Transverse colon (tissue), 4 donors: ENCODE measurements at regions of chr7 and their contacts with region 1.

Region 1: GRCh38 chr7:7535691-7536090 is at the start of gene COL28A1:
- DNase-seq: no peak
- H3K4me3 ChIP-seq: no peak within 1 kb of the TSS
- H3K27ac ChIP-seq: no peak within 1 kb of the TSS
- H3K4me1 ChIP-seq: peaks cover 0 to 4% (median 0%) of the 10 kb centered on the region in 4 donors
- H3K27me3 ChIP-seq: no peaks in the 10 kb centered on the region
- CTCF ChIP-seq: no peak
- EP300 ChIP-seq: no peak
- POLR2A ChIP-seq: no peak
- total RNA-seq, gene COL28A1: 0.60 to 4.4 (median 4.1) TPM

Region 2: GRCh38 chr7:7103343-7104313 is 432.1 kb before region 1 on chr7:
- in situ Hi-C with region 1: loop called in 3 of 4 experiments (anchors 5 to 10 kb)
- intact Hi-C with region 1: loop called (anchors 5 kb)
- DNase-seq: no peak
- H3K4me3 ChIP-seq: peak overlapping the region in 2 of 4 donors; percentile 3 to 11
- H3K27ac ChIP-seq: peak overlapping the region in 2 of 4 donors; percentile 2
- H3K4me1 ChIP-seq: peaks cover 0 to 6% (median 4%) of the 10 kb centered on the region in 4 donors
- H3K27me3 ChIP-seq: no peaks in the 10 kb centered on the region
- CTCF ChIP-seq: peak; percentile 65 to 75 (median 68)
- EP300 ChIP-seq: no peak
- POLR2A ChIP-seq: no peak

Region 3: DNA sequence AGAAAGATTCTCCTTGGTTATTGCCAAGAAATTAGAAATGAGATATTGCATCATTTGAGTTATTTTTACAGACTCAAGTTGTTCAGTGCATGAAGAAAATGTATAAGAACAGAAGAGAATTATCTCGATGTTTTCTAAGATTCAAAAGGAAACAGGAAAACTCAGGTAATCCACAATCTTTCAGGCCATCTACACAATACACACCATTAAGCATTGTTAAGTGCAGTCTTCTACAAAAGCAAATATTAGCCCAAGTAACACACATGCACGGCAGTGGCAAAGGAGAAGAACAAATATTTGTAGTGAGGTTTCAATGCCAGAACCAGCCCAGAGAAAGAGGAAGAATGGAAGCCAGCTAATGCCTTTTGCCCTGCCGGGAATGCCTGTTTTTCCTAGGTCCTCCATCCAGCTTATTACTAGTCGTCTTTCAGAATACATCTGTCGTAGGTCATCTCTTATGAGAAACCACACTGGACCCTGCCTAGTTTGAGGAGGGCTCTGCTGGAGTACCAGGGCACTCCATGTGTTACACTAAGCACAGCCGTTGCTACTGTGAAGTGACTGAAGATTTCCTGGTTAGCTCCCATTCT is 420.9 kb before region 1 on chr7:
- in situ Hi-C with region 1: loop called in 1 of 4 experiments (anchors 5 kb)
- intact Hi-C with region 1: no loop called
- DNase-seq: no peak
- H3K4me3 ChIP-seq: no peak overlapping the region
- H3K27ac ChIP-seq: peak overlapping the region in 1 of 4 donors; percentile 14
- H3K4me1 ChIP-seq: no peaks in the 10 kb centered on the region
- H3K27me3 ChIP-seq: no peaks in the 10 kb centered on the region
- CTCF ChIP-seq: no peak
- EP300 ChIP-seq: no peak
- POLR2A ChIP-seq: no peak

Region 4: GRCh38 chr7:7424151-7424873 is 111.4 kb before region 1 on chr7:
- in situ Hi-C with region 1: loop called in 2 of 4 experiments (anchors 5 kb)
- intact Hi-C with region 1: no loop called
- DNase-seq: peak; percentile 74
- H3K4me3 ChIP-seq: peak overlapping the region; percentile 22 to 51 (median 29)
- H3K27ac ChIP-seq: no peak overlapping the region
- H3K4me1 ChIP-seq: no peaks in the 10 kb centered on the region
- H3K27me3 ChIP-seq: no peaks in the 10 kb centered on the region
- CTCF ChIP-seq: peak; percentile 68 to 78 (median 72)
- EP300 ChIP-seq: no peak
- POLR2A ChIP-seq: no peak

Region 5: DNA sequence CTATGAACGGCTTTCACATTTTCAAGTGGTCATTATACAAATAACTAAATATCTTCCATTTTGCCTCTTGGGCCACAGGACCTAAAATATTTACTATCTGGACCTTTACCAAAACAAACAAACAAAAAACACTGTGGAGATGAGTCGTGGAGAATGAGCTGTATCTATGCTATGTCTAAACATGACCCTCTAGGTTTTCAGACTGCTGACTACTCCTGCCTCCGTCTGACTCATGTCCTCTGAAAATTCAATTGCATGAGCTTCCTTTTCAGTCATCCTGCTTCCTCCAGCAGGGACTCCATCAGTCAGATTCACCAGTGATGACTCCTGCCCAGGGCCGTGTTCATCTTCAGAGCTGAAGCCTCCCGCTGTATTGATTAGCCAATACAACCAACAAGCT is 96.8 kb before region 1 on chr7:
- in situ Hi-C with region 1: loop called in 1 of 4 experiments (anchors 10 kb)
- intact Hi-C with region 1: no loop called
- DNase-seq: no peak
- H3K4me3 ChIP-seq: no peak overlapping the region
- H3K27ac ChIP-seq: no peak overlapping the region
- H3K4me1 ChIP-seq: peaks cover 0 to 11% (median 0%) of the 10 kb centered on the region in 4 donors
- H3K27me3 ChIP-seq: no peaks in the 10 kb centered on the region
- CTCF ChIP-seq: no peak
- EP300 ChIP-seq: no peak
- POLR2A ChIP-seq: no peak